Naive thymus-derived CD4-positive, alpha-beta T cell (primary cell): ENCODE measurements at regions of chr10 and their contacts with region 1.

Region 1: DNA sequence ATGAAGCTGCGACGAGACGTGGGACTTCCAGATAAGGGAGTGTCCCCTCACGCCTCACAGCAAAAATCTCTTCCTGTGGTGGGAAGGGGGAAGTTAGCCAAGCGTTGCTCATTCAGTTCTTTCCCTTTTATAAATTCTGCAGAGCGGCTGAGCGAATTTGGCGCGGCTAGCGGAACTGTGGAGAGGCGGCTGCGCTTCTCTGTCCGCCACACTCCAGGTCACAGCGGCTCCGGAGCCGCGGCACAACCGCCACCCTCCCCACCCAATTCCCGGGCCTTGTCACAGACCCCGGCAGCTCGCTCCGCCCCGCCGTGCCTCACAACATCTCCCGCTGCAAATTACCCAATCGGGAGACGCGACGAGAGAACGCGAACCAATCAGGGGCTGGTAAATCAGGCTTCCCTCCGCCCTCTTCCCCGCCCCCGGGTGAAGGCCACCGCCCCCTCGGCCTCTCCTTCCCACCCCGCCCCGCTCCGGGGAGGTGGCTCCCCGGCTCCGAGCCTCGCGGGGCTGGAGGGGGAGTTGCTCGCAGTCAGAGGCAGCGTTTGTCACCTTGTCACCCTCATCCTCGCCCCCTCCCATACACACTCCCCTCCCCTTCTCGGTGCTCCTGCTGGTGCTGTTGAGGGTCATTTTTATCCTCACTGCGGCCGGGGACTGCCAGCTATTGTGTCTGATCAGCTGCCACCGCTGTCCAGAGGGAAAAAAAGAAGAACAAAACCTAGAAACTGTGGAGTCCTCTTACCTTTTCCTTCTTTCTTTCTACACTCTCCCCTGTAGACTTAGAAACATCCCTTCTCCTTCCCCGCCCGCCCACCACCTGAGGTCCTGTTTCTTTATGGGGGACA is 918 bp upstream of the ARHGAP21 start:
- DNase-seq: peak; percentile 87 to 94 (median 92)
- ATAC-seq: peak; percentile 93
- H3K4me3 ChIP-seq: peak overlapping the region; percentile 93
- H3K4me3 Mint-ChIP-seq: peak overlapping the region; percentile 89 to 96 (median 94)
- H3K27ac ChIP-seq: peak overlapping the region; percentile 65
- H3K27ac Mint-ChIP-seq: peak overlapping the region; percentile 45 to 96 (median 92)
- H3K4me1 ChIP-seq: peaks cover 0 to 12% of the 10 kb centered on the region in 2 donors
- H3K4me1 Mint-ChIP-seq: peaks cover 6 to 28% (median 19%) of the 10 kb centered on the region in 7 donors
- H3K27me3 ChIP-seq: no peaks in the 10 kb centered on the region
- H3K27me3 Mint-ChIP-seq: peaks cover 0 to 6% (median 0%) of the 10 kb centered on the region in 5 donors

Region 2: DNA sequence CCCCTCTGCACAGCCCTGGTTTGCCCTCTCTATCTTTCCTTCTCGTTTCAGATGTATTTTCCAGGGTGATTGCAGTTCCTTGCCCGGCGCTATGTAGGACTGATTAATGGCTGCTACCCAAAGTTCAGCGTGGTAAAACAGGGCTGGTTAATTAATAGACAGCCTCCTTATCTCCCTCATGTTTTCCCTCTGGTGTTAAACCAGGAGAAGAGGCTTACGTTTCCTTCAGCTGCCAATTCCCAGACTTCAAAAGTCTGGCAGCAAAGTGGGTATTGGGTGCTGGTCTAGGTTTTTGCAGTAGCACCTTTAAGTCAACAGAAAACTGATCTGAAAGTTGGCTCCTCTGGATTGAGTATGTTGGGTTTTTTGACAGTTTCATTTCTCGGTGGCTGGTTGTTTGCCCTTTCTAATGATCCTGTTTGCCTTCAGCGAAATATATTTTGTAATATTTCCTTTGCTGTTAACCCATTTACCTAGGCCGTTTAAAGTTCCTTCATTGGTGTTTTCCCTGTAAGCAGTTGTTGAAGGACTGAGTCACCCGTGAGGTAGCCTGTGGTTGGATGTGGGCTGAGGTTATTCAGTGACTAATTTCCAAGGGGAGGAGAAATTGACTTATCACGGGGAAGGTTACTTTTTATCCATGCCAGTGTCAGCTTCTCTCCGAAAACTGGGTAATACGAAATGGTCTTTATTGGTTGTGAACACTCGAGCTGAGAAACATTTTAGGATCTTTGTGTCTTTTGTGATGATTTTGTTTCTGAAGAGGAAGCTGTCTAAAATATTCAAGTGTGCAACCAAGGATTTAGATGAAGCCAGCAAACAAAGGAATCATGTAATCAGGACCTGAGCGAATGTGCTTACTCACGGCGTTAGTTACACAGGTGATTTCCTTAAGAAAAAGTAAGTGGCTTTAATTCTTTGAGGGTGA is 258.4 kb before region 1 on chr10:
- CTCF ChIA-PET with region 1: no interaction called
- POLR2A ChIA-PET with region 1: no interaction called
- intact Hi-C with region 1: loop called in 1 of 2 experiments (anchors 10 kb)
- DNase-seq: peak in 1 of 9 donors; percentile 69
- ATAC-seq: peak; percentile 42
- H3K4me3 ChIP-seq: no peak overlapping the region
- H3K4me3 Mint-ChIP-seq: peak overlapping the region in 1 of 10 donors; percentile 66
- H3K27ac ChIP-seq: no peak overlapping the region
- H3K27ac Mint-ChIP-seq: peak overlapping the region in 1 of 9 donors; percentile 83
- H3K4me1 ChIP-seq: no peaks in the 10 kb centered on the region
- H3K4me1 Mint-ChIP-seq: peaks cover 4 to 49% (median 14%) of the 10 kb centered on the region in 7 donors
- H3K27me3 ChIP-seq: no peaks in the 10 kb centered on the region
- H3K27me3 Mint-ChIP-seq: peaks cover 0 to 10% (median 8%) of the 10 kb centered on the region in 5 donors

Region 3: GRCh38 chr10:24642622-24643417 is 81.8 kb before region 1 on chr10:
- CTCF ChIA-PET with region 1: no interaction called
- POLR2A ChIA-PET with region 1: no interaction called
- intact Hi-C with region 1: loop called (anchors 1 kb)
- DNase-seq: peak in 7 of 9 donors; percentile 24 to 64 (median 58)
- ATAC-seq: peak; percentile 93
- H3K4me3 ChIP-seq: no peak overlapping the region
- H3K4me3 Mint-ChIP-seq: no peak overlapping the region
- H3K27ac ChIP-seq: no peak overlapping the region
- H3K27ac Mint-ChIP-seq: no peak overlapping the region
- H3K4me1 ChIP-seq: no peaks in the 10 kb centered on the region
- H3K4me1 Mint-ChIP-seq: peaks cover 0 to 2% (median 0%) of the 10 kb centered on the region in 7 donors
- H3K27me3 ChIP-seq: no peaks in the 10 kb centered on the region
- H3K27me3 Mint-ChIP-seq: no peaks in the 10 kb centered on the region

Region 4: DNA sequence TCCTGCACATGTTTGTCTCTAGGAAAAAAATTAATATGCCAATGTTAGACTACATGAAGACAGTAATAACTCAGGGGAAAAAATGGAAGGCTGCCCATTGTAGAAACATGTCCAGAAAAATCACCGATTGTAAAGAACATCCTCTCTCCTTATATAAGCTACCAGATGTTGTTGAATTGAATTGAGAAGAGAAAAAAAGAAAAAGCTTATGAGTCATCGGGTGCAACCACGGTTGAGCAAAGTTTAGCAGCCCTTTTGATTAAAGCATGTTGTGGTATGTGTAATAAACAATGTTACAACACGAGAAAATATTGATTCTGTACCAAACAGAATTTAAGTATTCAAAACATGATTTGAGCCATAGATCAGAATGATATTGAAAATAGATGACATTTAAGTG is 101.4 kb after region 1 on chr10:
- CTCF ChIA-PET with region 1: no interaction called
- POLR2A ChIA-PET with region 1: no interaction called
- intact Hi-C with region 1: loop called (anchors 5 kb)
- DNase-seq: no peak
- ATAC-seq: no peak
- H3K4me3 ChIP-seq: no peak overlapping the region
- H3K4me3 Mint-ChIP-seq: peak overlapping the region in 8 of 10 donors; percentile 11 to 62 (median 44)
- H3K27ac ChIP-seq: no peak overlapping the region
- H3K27ac Mint-ChIP-seq: peak overlapping the region in 6 of 9 donors; percentile 1 to 67 (median 36)
- H3K4me1 ChIP-seq: peaks cover 3 to 21% of the 10 kb centered on the region in 2 donors
- H3K4me1 Mint-ChIP-seq: peaks cover 14 to 54% (median 46%) of the 10 kb centered on the region in 7 donors
- H3K27me3 ChIP-seq: no peaks in the 10 kb centered on the region
- H3K27me3 Mint-ChIP-seq: no peaks in the 10 kb centered on the region

Region 5: GRCh38 chr10:24887855-24888231 is 163.2 kb after region 1 on chr10:
- CTCF ChIA-PET with region 1: no interaction called
- POLR2A ChIA-PET with region 1: interaction called, 3 read pairs
- intact Hi-C with region 1: loop called in 1 of 2 experiments (anchors 5 kb)
- DNase-seq: no peak
- ATAC-seq: peak; percentile 7
- H3K4me3 ChIP-seq: peak overlapping the region; percentile 30
- H3K4me3 Mint-ChIP-seq: peak overlapping the region; percentile 56 to 77 (median 72)
- H3K27ac ChIP-seq: peak overlapping the region; percentile 27
- H3K27ac Mint-ChIP-seq: peak overlapping the region; percentile 83 to 95 (median 86)
- H3K4me1 ChIP-seq: peaks cover 16 to 45% of the 10 kb centered on the region in 2 donors
- H3K4me1 Mint-ChIP-seq: peaks cover 35 to 71% (median 63%) of the 10 kb centered on the region in 7 donors
- H3K27me3 ChIP-seq: no peaks in the 10 kb centered on the region
- H3K27me3 Mint-ChIP-seq: no peaks in the 10 kb centered on the region

Region 6: GRCh38 chr10:25016376-25017154 is 292.0 kb after region 1 on chr10 and contains the start of gene THNSL1:
- CTCF ChIA-PET with region 1: no interaction called
- POLR2A ChIA-PET with region 1: interaction called, 6 read pairs
- intact Hi-C with region 1: loop called (anchors 1 kb)
- DNase-seq: peak; percentile 90 to 99 (median 96)
- ATAC-seq: peak; percentile 97
- H3K4me3 ChIP-seq: peak within 1 kb of the TSS; percentile 76
- H3K4me3 Mint-ChIP-seq: peak within 1 kb of the TSS; percentile 87 to 98 (median 90)
- H3K27ac ChIP-seq: peak within 1 kb of the TSS; percentile 82
- H3K27ac Mint-ChIP-seq: peak within 1 kb of the TSS; percentile 91 to 99 (median 94)
- H3K4me1 ChIP-seq: peaks cover 0 to 8% of the 10 kb centered on the region in 2 donors
- H3K4me1 Mint-ChIP-seq: peaks cover 11 to 43% (median 32%) of the 10 kb centered on the region in 7 donors
- H3K27me3 ChIP-seq: no peaks in the 10 kb centered on the region
- H3K27me3 Mint-ChIP-seq: peaks cover 0 to 10% (median 0%) of the 10 kb centered on the region in 5 donors
- total RNA-seq, gene THNSL1: 1.4 to 10.6 (median 2.5) TPM